ENCODE measurements at regions of chr7 and their contacts with region 1.

Region 1: DNA sequence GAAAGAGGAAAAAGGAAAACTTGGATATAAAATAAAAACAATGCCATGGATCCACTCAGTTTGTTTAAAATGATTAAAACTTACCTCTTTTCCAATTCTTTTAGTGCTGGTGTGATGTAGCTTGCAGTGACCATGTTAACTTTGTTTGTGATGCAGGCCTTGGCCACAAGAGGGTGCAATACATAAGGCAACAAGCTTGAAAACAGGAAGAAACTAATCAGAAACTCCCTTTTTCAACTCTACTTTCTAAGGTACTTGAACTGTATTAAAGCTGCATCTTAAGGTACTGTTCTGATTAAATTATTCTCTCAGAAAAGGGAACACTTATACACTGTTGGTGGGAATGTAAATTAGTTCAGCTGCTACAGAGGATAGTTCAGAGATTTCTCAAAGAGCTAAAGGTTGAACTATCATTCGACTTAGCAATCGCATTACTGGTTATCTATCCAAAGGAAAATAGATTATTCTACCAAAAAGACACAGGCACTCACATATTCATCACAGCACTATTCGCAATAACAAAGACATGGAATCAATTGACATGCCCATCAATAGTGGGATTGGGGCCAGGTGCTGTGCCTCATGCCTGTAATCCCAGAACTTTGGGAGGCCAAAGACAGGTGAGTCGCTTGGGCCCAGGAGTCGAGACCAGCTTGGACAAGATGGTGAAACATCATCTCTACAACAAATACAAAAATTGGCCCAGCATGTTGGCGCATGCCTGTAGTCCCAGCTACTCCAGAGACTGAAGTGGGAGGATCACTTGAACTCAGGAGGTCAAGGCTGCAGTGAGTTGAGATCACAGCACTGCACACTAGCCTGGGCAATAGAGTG is 50.9 kb downstream of the AASS start:
- DNase-seq: peak; percentile 64
- ATAC-seq: no peak
- H3K4me3 ChIP-seq: no peak overlapping the region
- H3K27ac ChIP-seq: no peak overlapping the region
- H3K4me1 ChIP-seq: no peaks in the 10 kb centered on the region
- H3K27me3 ChIP-seq: no peaks in the 10 kb centered on the region
- CTCF ChIP-seq: peak; percentile 76

Region 2: DNA sequence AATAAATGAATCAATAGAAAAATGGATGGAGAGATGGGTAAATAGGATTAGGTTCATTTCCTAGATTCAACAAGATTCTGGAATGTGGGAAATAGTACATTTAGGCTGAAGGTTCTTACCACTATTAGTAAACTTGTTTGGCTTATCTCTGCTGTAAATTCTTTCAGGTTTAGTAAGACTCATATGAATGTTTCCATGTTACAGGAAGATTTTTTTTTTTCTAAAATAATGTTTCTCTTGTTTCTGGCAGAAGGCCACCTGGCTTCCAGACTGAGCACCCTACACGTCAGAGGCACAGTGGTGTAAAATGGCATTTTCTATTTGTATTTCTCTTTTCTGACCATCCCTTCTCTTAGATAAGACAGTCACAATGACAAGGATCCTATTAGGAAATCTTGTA is 73.5 kb after region 1 on chr7:
- CTCF ChIA-PET with region 1: no interaction called
- POLR2A ChIA-PET with region 1: no interaction called
- in situ Hi-C with region 1: no loop called
- intact Hi-C with region 1: loop called (anchors 10 kb)
- DNase-seq: no peak
- ATAC-seq: no peak
- H3K4me3 ChIP-seq: no peak overlapping the region
- H3K27ac ChIP-seq: no peak overlapping the region
- H3K4me1 ChIP-seq: no peaks in the 10 kb centered on the region
- H3K27me3 ChIP-seq: no peaks in the 10 kb centered on the region
- CTCF ChIP-seq: no peak

Measured in Panc1 (cell line).